ENCODE measurements at regions of chr16 and their contacts with region 1.

Region 1: DNA sequence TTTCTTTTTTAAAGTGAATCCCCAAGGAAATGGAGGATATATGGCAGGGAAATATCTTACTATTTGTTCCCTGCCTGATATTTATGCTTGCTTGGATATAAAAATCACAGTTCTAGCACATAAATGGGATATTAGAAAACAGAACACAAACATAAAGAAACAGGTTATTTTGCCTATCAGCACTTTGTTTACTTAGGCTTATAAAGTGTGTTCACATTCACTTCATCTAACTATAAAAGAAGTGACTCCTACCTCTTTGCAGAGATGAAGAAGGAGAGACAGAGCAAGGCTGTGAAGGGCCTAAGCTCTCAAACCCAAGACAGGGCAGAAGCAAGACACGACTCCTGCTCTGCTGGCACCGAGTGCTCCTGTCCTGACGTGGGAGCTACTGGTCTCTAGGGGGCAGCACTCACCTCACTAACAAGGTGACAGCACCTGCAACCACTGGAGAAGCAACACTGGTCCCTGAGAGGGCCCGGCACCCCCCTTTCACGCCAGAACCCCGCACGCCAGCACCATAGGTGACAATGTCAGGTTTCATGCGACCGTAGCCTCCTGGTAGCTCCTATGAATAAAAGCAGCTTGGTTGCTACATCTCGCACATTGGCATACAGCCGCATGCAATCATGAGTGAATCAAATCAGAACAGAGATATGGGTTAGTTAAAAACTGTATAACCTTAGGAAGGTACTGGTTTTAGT is 32.0 kb downstream of the MBTPS1 start:
- DNase-seq: peak; percentile 79 to 85 (median 83)
- ATAC-seq: peak; percentile 98
- H3K4me3 ChIP-seq: no peak overlapping the region
- H3K27ac ChIP-seq: no peak overlapping the region
- H3K4me1 ChIP-seq: peaks cover 0 to 3% of the 10 kb centered on the region in 2 experiments; a peak in 1 of 5 replicates
- H3K27me3 ChIP-seq: no peaks in the 10 kb centered on the region
- CTCF ChIP-seq: peak; percentile 87 to 95 (median 88)
- EP300 ChIP-seq: no peak
- POLR2A ChIP-seq: no peak
- RAD21 ChIP-seq: peak; percentile 60 to 91

Region 2: GRCh38 chr16:84144859-84145639 is 60.3 kb after region 1 on chr16 and contains the starts of genes DNAAF1 and HSDL1:
- CTCF ChIA-PET with region 1: interaction called, 3 read pairs
- POLR2A ChIA-PET with region 1: no interaction called
- in situ Hi-C with region 1: no loop called
- intact Hi-C with region 1: loop called (anchors 2 kb)
- DNase-seq: peak; percentile 95 to 100 (median 100)
- ATAC-seq: peak; percentile 89
- H3K4me3 ChIP-seq: peak within 1 kb of the TSS; percentile 75
- H3K27ac ChIP-seq: peak within 1 kb of the TSS; percentile 61
- H3K4me1 ChIP-seq: peaks cover 3 to 27% of the 10 kb centered on the region in 2 experiments; a peak in 4 of 5 replicates
- H3K27me3 ChIP-seq: peaks cover 4 to 14% of the 10 kb centered on the region in 2 experiments; a peak in 3 of 5 replicates
- CTCF ChIP-seq: peak; percentile 3 to 22 (median 9); a peak in 3 of 6 replicates
- EP300 ChIP-seq: no peak
- POLR2A ChIP-seq: peak; percentile 55; the same call in 1 of the 2 replicates
- RAD21 ChIP-seq: no peak
- polyA plus RNA-seq, gene DNAAF1: not detected
- polyA plus RNA-seq, gene HSDL1: 14.8 to 16.3 TPM

Region 3: GRCh38 chr16:84166796-84167695 is 82.3 kb after region 1 on chr16:
- CTCF ChIA-PET with region 1: no interaction called
- POLR2A ChIA-PET with region 1: no interaction called
- in situ Hi-C with region 1: loop called (anchors 5 kb)
- intact Hi-C with region 1: no loop called
- DNase-seq: no peak
- ATAC-seq: no peak
- H3K4me3 ChIP-seq: no peak overlapping the region
- H3K27ac ChIP-seq: no peak overlapping the region
- H3K4me1 ChIP-seq: peaks cover 0 to 12% of the 10 kb centered on the region in 2 experiments; a peak in 3 of 5 replicates
- H3K27me3 ChIP-seq: peaks cover 41 to 62% of the 10 kb centered on the region in 2 experiments
- CTCF ChIP-seq: no peak
- EP300 ChIP-seq: no peak
- POLR2A ChIP-seq: no peak
- RAD21 ChIP-seq: no peak

Region 4: DNA sequence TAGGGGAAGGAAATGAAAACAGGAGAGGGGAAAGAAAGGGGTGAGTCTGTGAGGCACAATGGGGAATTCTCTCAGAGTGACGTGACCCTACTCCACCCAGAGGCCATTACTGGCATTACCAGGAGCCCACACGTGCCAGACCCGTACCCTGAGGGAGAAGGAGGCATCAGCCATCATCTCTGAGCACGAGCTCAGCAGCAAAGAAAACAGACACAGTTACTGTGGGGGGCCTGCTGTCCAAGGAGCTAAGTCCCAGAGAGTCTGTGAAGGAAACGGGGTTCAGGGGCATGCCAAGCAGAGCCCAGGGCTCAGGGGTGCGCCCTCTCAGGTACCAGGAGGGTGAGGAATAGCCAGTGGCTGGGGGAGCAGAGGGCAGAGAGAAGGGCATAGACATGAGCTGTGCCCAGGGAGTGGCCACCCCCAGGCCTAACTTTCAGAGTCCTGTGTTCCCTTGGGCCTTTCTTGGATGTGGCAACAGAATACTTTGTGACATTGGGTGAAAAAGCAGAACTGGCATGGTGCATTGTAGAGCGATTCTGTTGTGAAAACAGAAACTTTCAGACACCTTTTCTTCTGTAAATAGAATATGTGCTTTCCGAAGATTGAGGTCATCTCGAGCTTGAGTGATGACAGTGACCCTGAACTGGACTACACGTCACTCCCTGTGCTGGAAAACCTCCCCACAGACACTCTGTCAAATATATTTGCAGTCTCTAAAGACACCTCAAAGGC is 90.8 kb after region 1 on chr16:
- CTCF ChIA-PET with region 1: interaction called, 10 read pairs
- POLR2A ChIA-PET with region 1: no interaction called
- in situ Hi-C with region 1: no loop called
- intact Hi-C with region 1: loop called (anchors 1 kb)
- DNase-seq: peak; percentile 76 to 85 (median 80)
- ATAC-seq: peak; percentile 92
- H3K4me3 ChIP-seq: no peak overlapping the region
- H3K27ac ChIP-seq: no peak overlapping the region
- H3K4me1 ChIP-seq: peaks cover 7 to 36% of the 10 kb centered on the region in 2 experiments; a peak in 3 of 5 replicates
- H3K27me3 ChIP-seq: peaks cover 5 to 26% of the 10 kb centered on the region in 2 experiments; a peak in 4 of 5 replicates
- CTCF ChIP-seq: peak; percentile 80 to 92 (median 90)
- EP300 ChIP-seq: no peak
- POLR2A ChIP-seq: no peak
- RAD21 ChIP-seq: peak; percentile 81 to 92

Region 5: GRCh38 chr16:84186685-84187437 is 102.1 kb after region 1 on chr16 and contains the start of gene TAF1C:
- CTCF ChIA-PET with region 1: interaction called, 26 read pairs
- POLR2A ChIA-PET with region 1: interaction called, 3 read pairs
- in situ Hi-C with region 1: no loop called
- intact Hi-C with region 1: no loop called
- DNase-seq: peak; percentile 98 to 99 (median 99)
- ATAC-seq: peak; percentile 95
- H3K4me3 ChIP-seq: peak within 1 kb of the TSS; percentile 94
- H3K27ac ChIP-seq: peak within 1 kb of the TSS; percentile 78
- H3K4me1 ChIP-seq: peaks cover 5 to 34% of the 10 kb centered on the region in 2 experiments; a peak in 4 of 5 replicates
- H3K27me3 ChIP-seq: peaks cover 2 to 10% of the 10 kb centered on the region in 2 experiments; a peak in 1 of 5 replicates
- CTCF ChIP-seq: peak; percentile 98 to 99 (median 99)
- EP300 ChIP-seq: peak; percentile 62
- POLR2A ChIP-seq: peak; percentile 87
- RAD21 ChIP-seq: peak; percentile 80 to 89
- polyA plus RNA-seq, gene TAF1C: 1.5 TPM

Region 6: DNA sequence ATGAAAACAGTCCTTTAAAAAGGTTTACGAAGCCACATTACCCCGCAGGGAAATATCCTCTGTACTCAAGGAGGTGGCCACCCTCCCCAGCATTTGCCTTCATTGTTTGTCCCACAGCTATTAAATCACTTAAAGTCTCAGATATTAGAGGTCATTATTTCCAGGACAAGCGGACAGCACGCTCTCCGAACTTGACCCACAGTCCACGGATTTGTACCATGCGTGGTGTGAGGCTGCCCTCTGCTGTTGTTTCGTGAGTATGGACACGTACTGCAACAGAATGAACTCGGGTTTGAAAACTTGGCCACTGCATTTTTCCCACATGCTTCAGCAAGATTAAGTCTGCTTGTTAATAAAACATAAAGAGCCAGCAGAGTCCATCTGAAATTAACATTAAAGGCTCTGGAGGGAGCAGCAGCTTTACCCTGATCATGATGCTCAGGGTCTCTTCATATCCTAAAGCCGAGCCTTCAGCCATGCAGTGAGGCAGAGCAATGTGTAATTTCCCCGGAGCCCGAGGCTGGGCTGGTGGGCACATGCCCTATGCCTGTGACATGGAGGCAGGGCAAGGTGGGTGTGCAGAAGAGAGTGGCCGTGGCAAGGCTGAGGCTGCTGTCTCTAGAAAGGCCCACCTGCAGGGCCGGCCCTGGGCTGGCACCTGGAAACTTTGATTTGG is 400.0 kb after region 1 on chr16:
- CTCF ChIA-PET with region 1: interaction called, 8 read pairs
- POLR2A ChIA-PET with region 1: no interaction called
- in situ Hi-C with region 1: no loop called
- intact Hi-C with region 1: loop called (anchors 10 kb)
- DNase-seq: peak; percentile 72 to 83 (median 74)
- ATAC-seq: peak; percentile 92
- H3K4me3 ChIP-seq: no peak overlapping the region
- H3K27ac ChIP-seq: no peak overlapping the region
- H3K4me1 ChIP-seq: peaks cover 0 to 16% of the 10 kb centered on the region in 2 experiments; a peak in 2 of 5 replicates
- H3K27me3 ChIP-seq: no peaks in the 10 kb centered on the region
- CTCF ChIP-seq: peak; percentile 88 to 94 (median 91)
- EP300 ChIP-seq: no peak
- POLR2A ChIP-seq: no peak
- RAD21 ChIP-seq: peak; percentile 95 to 97

Measured in K562 (cell line).